Adrenal gland (tissue), 19 donors: ENCODE measurements at regions of chr13 and their contacts with region 1.

Region 1: DNA sequence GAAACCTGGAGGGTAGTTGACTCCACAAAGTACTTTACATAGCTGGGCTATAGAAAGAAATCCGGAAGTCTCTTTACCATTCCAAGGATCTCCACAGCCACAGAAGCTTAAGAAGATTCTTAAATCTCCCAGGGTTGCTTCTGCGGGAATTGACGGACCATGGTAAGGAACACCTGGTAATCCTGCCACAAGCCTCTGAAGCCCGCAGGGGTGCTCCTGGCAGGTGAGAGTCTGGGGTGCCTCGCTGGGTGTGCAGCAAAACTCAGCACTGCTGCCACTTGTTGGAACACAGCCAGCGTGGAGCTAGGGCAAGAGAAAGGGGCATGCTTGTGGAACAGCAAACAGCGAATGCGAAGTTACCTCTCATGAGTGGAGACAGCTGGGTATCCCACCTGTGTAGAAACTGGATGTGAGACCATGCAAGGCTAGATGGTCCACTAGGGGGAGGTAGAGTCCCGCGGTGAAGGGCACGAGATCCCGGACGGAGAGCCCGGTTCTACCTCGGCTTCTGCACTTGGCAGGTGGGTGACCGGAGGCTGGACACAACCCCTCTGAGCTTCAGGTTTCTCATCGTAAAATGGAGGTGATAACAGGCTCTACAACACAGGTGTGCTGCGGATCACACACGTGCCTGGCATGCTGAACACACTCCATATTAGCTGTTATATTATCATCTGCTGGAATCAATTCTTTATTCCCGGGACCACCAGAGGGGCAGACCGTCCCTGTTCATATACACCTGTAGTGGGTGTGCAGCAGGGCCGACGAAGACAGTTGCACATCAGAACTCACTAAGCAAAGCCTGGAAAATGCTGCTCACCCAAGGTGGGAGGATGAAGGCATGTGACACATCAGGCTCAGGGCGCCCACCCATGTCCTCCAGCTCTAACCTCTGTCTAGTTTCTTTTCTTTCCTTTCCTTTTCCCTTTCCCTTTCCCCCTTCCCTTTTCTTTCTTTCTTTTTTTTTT is 24.1 kb upstream of the UBAC2 start:
- DNase-seq: peak; percentile 55 to 86 (median 76)
- H3K4me3 ChIP-seq: no peak overlapping the region
- H3K27ac ChIP-seq: no peak overlapping the region
- H3K4me1 ChIP-seq: peaks cover 0 to 8% of the 10 kb centered on the region in 2 donors
- H3K27me3 ChIP-seq: no peaks in the 10 kb centered on the region
- CTCF ChIP-seq: peak; percentile 72 to 92 (median 86)
- POLR2A ChIP-seq: no peak

Region 2: DNA sequence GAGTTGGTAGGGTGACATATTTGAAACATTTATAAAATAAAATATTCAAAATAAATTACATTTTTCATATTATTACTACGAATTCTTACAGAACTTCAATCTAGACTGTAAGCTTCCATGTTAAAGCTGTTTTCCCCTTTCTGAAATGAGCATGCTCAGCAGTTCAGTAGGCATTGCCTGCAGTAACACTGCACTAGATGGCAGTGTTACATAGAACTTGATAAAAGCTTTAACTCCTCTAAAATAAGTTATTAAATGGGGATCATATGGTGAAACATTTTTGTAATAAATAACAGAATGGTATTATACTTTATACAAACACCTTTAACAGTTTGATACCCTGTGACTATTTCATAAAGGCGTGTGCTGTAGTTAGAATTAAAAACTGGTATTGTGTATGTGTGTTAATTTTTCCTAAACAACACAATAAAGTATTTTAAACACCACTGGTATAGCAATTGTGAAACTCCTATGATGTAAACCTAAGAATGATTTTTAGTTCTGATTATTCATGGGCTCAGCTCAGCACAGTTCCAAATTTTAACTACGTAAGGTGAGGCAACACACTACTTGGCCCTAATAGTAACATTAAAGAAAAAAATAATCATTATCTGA is 93.1 kb after region 1 on chr13:
- intact Hi-C with region 1: loop called (anchors 2 kb)
- DNase-seq: peak in 4 of 7 donors; percentile 29 to 45 (median 32)
- H3K4me3 ChIP-seq: no peak overlapping the region
- H3K27ac ChIP-seq: peak overlapping the region in 2 of 5 donors; percentile 30 to 43
- H3K4me1 ChIP-seq: peaks cover 0 to 6% of the 10 kb centered on the region in 2 donors
- H3K27me3 ChIP-seq: no peaks in the 10 kb centered on the region
- CTCF ChIP-seq: peak; percentile 51 to 79 (median 71)
- POLR2A ChIP-seq: no peak

Region 3: DNA sequence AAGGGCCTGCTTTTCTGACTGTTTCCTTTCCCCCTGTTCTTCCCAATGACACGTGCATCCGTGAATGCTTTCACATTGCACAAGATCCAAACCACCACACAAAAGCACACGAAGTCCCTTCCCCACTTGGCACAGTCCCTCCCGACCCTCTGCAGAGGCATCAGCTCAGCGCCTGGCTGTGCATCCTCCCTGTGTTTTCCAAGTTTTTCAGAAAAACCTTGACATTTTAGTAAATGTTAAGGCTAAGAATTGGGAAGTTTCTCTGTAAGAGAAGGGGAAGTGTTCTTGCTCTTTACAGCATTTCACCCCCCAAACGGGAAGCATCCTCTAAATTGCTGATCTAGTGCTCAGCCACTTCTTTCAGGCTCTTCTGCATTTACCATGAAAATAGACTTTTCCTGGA is 230.2 kb after region 1 on chr13:
- intact Hi-C with region 1: no loop called
- DNase-seq: peak in 3 of 7 donors; percentile 28 to 50 (median 36)
- H3K4me3 ChIP-seq: no peak overlapping the region
- H3K27ac ChIP-seq: peak overlapping the region in 2 of 5 donors; percentile 42 to 52
- H3K4me1 ChIP-seq: peaks cover 0 to 7% of the 10 kb centered on the region in 2 donors
- H3K27me3 ChIP-seq: no peaks in the 10 kb centered on the region
- CTCF ChIP-seq: no peak
- POLR2A ChIP-seq: no peak